Activated T-helper 1 cell treated with anti-CD3 and anti-CD28 coated beads, Interleukin-12 subunit alpha, Interleukin-12 subunit beta, Interleukin-2, Interleukin-4 antibody, amounts not matched to agents 30 ng/mL and 10 ng/mL and 1 ng/mL, durations not matched to agents 14 hours and 24 hours and 36 hours (primary cell): ENCODE measurements at regions of chr14 and their contacts with region 1.

Region 1: GRCh38 chr14:35292051-35292769 is at the start of gene PSMA6:
- DNase-seq: peak; percentile 99
- H3K4me3 Mint-ChIP-seq: peak within 1 kb of the TSS; percentile 99
- H3K27ac Mint-ChIP-seq: peak within 1 kb of the TSS; percentile 94
- H3K4me1 Mint-ChIP-seq: peaks cover 56% of the 10 kb centered on the region
- H3K27me3 Mint-ChIP-seq: no peaks in the 10 kb centered on the region
- total RNA-seq, gene PSMA6: 475 and 479 TPM in 2 replicates

Region 2: GRCh38 chr14:34629657-34630529 is 662.3 kb before region 1 on chr14 and contains the start of gene SNX6:
- intact Hi-C with region 1: loop called (anchors 2 kb)
- DNase-seq: peak; percentile 76
- H3K4me3 Mint-ChIP-seq: peak within 1 kb of the TSS; percentile 95
- H3K27ac Mint-ChIP-seq: peak within 1 kb of the TSS; percentile 99
- H3K4me1 Mint-ChIP-seq: peaks cover 8% of the 10 kb centered on the region
- H3K27me3 Mint-ChIP-seq: peaks cover 11% of the 10 kb centered on the region
- total RNA-seq, gene SNX6: 70.3 and 75.6 TPM in 2 replicates

Region 3: GRCh38 chr14:35140718-35141581 is 151.3 kb before region 1 on chr14:
- intact Hi-C with region 1: loop called (anchors 2 kb)
- DNase-seq: no peak
- H3K4me3 Mint-ChIP-seq: no peak overlapping the region
- H3K27ac Mint-ChIP-seq: no peak overlapping the region
- H3K4me1 Mint-ChIP-seq: peaks cover 29% of the 10 kb centered on the region
- H3K27me3 Mint-ChIP-seq: no peaks in the 10 kb centered on the region

Region 4: DNA sequence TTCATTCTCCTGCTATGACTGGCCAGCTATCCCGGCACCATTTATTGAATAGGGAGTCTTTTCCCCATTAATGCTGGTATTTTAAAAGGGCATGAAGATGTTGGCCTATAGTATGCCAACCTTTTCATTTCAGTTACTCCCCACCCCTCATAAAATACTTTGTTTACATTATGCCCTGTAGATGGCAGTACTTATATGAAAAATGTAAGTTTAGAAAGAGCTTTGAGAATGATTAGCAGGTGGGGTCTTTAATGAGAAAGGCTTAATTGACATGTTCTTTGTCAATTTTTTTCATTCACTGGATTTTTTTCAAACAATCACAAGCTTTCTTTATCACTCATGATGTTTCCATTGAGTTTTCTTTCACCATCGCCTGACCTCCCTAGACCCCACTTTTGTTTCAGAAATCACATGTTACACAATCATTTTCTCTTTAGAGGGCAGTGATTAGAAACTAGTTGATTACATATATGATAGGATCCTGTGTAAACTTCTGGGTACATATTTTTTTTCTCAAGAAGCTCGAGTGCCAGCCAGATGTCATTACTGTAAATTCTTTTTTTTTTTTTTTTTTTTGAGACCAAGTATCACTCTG is 62.6 kb before region 1 on chr14:
- intact Hi-C with region 1: loop called (anchors 1 kb)
- DNase-seq: no peak
- H3K4me3 Mint-ChIP-seq: no peak overlapping the region
- H3K27ac Mint-ChIP-seq: no peak overlapping the region
- H3K4me1 Mint-ChIP-seq: peaks cover 42% of the 10 kb centered on the region
- H3K27me3 Mint-ChIP-seq: no peaks in the 10 kb centered on the region

Region 5: DNA sequence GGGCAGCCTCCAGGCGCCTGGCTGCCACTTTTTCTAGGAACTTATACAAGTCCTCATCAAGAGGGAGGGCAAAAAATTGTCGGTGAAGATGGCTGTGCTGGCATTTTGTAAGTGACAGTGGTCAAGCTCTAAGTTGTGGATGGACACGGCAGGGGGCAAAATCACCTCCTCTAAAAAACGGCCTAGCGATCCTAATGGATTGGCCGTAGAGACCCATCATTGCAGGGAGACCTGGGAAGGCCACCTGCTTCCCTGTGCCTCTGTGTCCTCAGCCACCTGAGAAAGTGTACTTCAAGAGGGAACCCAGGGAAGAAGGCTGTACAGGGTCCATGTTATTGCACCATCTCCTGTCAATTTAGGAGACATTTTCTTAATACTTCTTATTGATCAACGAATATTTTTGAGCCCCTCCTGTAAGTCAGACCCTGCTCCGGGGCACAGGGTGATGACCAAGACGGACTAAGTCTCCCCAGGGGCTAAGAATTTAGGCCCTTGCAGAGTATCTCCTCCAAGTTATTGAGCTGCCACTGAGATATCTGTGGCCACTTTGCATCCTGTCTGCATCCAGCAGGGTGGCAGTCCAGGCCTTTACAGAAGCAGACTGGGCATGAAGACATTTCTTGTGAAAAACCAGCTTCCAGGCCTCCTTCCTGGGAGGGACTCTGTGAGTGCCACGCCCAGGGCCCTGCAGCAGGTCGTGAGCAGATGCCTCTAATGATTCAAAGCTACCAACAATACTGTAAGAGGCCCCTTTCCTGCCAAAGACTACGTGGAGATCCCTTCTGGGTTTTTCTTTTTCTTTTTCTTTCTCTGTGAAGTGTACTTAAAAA is 40.5 kb after region 1 on chr14:
- intact Hi-C with region 1: loop called (anchors 1 kb)
- DNase-seq: peak; percentile 43
- H3K4me3 Mint-ChIP-seq: peak overlapping the region; percentile 60
- H3K27ac Mint-ChIP-seq: peak overlapping the region; percentile 83
- H3K4me1 Mint-ChIP-seq: peaks cover 31% of the 10 kb centered on the region
- H3K27me3 Mint-ChIP-seq: no peaks in the 10 kb centered on the region

Region 6: GRCh38 chr14:35355981-35356841 is 64.0 kb after region 1 on chr14:
- intact Hi-C with region 1: loop called (anchors 2 kb)
- DNase-seq: no peak
- H3K4me3 Mint-ChIP-seq: no peak overlapping the region
- H3K27ac Mint-ChIP-seq: peak overlapping the region; percentile 33
- H3K4me1 Mint-ChIP-seq: peaks cover 16% of the 10 kb centered on the region
- H3K27me3 Mint-ChIP-seq: no peaks in the 10 kb centered on the region